ENCODE measurements at regions of chr3 and their contacts with region 1.

Region 1: DNA sequence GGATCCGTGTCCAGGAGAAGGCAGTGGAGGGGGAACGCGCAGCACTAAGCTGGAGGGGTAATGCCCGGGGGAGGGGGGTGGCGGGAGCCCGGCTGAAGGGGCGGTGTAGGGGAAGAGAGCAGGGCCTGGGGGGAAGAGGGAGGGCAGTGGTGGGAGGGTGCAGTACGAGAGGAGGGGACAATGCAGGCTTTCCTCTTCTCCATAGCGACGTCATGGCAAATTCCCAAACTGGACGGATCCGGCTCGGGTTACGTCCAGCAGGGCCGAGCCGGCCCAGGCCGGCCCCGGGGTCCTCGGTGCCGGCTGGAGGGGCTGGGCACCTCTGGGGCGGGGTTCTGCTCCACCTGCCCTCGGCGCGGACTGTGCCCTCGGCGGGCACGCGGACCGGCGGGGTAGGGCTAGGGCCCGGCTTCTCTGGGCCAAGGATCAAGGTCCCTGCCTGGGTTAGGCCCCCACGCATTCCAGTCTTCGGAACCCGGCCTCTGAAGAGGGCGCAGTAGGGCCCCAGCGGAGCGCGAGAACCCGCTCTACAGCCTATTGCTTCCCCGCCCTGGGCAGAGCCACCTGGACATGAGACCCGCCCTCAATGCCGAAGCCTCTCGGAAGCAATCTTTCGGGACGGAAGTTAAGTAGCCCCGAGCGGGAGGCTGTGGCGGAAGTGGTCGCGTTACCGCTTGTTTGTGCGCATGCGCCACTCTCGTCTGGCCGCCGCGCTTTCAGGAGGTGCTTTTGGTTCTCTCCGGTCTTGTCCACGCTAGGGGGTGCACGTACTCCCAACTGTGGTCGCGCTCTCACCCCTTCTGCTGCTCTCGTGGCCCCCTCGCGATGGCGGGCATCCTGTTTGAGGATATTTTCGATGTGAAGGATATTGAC is 1.4 kb downstream of the POLR2H start:
- DNase-seq: peak; percentile 98
- H3K4me3 Mint-ChIP-seq: peak overlapping the region; percentile 96
- H3K27ac Mint-ChIP-seq: peak overlapping the region; percentile 94
- H3K4me1 Mint-ChIP-seq: peaks cover 30% of the 10 kb centered on the region
- H3K27me3 Mint-ChIP-seq: no peaks in the 10 kb centered on the region

Region 2: DNA sequence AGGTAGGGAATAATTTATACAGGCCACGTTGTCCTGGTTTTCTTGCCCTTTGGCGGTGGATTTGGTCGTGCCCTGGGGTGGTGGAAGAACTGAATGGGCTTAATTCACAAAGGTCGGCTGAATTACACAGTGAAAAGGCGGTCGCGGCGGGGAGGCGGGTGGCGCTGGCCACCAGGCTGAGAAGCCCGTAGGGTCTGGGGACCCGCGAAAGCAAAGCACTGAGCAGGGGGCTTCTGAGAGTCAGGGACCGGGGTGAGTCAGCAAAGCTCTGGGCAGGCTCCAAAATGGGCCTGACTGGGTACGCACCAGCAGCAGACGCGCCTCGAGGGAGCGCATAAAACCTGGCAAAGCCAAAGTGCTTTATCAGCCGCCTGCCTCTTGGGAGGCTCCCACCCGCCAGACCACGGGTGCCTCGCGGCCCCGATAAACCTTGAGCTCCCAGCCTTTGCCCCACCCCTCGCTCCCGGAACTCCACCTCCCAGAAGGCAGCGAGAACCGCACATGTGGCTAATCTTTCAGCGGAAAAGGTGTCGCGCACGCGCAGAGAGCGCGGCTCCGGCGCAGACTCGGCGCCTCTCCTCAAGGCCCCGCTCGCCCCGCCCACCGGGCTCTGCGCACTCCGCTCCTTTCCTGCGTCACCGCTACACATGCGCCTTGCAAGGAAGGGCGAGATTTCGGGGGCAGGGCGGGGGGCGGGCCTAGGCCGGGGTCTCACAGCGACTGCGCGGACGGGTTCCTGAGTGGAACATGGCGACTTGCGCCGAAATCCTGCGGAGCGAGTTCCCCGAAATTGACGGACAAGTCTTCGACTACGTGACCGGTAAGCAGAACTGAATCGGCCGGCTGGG is 177.2 kb before region 1 on chr3 and contains the start of gene ABCF3:
- CTCF ChIA-PET with region 1: interaction called, 3 read pairs
- POLR2A ChIA-PET with region 1: no interaction called
- intact Hi-C with region 1: loop called (anchors 2 kb)
- DNase-seq: peak; percentile 99
- H3K4me3 Mint-ChIP-seq: peak within 1 kb of the TSS; percentile 96
- H3K27ac Mint-ChIP-seq: peak within 1 kb of the TSS; percentile 92
- H3K4me1 Mint-ChIP-seq: peaks cover 29% of the 10 kb centered on the region
- H3K27me3 Mint-ChIP-seq: no peaks in the 10 kb centered on the region
- total RNA-seq, gene ABCF3: 41.2 to 48.7 TPM

Region 3: DNA sequence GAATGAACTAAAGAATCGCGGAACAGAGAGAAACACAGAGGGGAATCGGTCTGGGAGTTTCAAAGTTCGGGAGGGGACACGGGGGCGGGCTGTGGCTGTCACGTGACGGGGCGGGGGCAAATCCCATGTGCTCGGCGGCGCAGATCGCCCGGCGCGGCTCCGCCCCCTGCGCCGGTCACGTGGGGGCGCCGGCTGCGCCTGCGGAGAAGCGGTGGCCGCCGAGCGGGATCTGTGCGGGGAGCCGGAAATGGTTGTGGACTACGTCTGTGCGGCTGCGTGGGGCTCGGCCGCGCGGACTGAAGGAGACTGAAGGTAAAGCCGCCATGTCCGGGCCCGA is 48.6 kb before region 1 on chr3 and contains the start of gene EIF4G1:
- CTCF ChIA-PET with region 1: no interaction called
- POLR2A ChIA-PET with region 1: no interaction called
- intact Hi-C with region 1: loop called (anchors 1 kb)
- DNase-seq: peak; percentile 95
- H3K4me3 Mint-ChIP-seq: peak within 1 kb of the TSS; percentile 86
- H3K27ac Mint-ChIP-seq: peak within 1 kb of the TSS; percentile 93
- H3K4me1 Mint-ChIP-seq: peaks cover 29% of the 10 kb centered on the region
- H3K27me3 Mint-ChIP-seq: no peaks in the 10 kb centered on the region
- total RNA-seq, gene EIF4G1: 410 to 432 TPM

Region 4: DNA sequence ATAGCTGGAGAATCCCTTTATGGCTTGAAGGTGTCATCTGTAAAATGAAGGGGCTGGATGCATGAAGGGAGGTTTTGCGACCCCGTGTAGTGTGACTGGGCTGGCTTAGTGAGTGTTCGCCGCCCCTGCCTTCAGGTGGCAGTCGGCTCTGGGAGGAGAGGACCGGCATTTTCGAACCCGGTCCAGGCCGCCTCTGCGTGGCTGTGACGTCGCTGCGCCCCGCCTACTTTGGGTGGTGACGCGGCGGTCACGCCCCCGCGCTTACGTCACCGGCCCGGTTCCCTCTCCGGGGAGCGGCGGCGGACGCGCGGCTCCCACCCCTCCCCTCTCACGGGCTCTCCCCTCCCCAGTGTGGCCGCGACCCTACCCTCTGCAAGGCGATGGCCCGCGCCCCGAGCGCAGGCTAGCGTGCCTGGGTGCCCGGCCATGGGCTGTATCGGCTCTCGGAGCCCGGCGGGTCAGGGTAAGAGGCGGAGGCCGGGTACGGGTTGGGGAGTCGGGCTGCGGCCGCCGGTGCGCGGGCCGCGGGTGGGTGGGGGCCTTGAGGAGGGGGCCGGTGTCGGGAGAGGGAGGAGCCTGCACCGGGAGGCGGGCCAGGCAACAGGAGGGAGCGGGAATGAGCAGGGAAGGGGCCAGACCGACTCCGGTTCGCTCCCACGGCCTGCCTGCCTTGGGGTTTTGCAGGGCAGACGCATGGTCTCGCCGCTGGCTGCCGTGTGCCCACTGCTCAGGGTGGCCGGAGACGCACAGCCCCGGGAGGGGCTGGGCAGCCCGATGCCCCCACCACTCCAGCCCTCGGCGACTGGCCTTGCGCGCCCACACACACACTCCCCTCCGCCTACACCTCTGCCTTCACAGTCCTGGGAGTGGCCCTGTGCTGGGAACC is 27.0 kb before region 1 on chr3:
- CTCF ChIA-PET with region 1: no interaction called
- POLR2A ChIA-PET with region 1: interaction called, 4 read pairs
- intact Hi-C with region 1: loop called (anchors 1 kb)
- DNase-seq: peak; percentile 89
- H3K4me3 Mint-ChIP-seq: peak overlapping the region; percentile 81
- H3K27ac Mint-ChIP-seq: peak overlapping the region; percentile 88
- H3K4me1 Mint-ChIP-seq: peaks cover 54% of the 10 kb centered on the region
- H3K27me3 Mint-ChIP-seq: no peaks in the 10 kb centered on the region

Region 5: GRCh38 chr3:184523825-184524615 is 161.1 kb after region 1 on chr3:
- CTCF ChIA-PET with region 1: no interaction called
- POLR2A ChIA-PET with region 1: no interaction called
- intact Hi-C with region 1: loop called (anchors 2 kb)
- DNase-seq: peak; percentile 59
- H3K4me3 Mint-ChIP-seq: no peak overlapping the region
- H3K27ac Mint-ChIP-seq: no peak overlapping the region
- H3K4me1 Mint-ChIP-seq: peaks cover 18% of the 10 kb centered on the region
- H3K27me3 Mint-ChIP-seq: peaks cover 24% of the 10 kb centered on the region

Region 6: DNA sequence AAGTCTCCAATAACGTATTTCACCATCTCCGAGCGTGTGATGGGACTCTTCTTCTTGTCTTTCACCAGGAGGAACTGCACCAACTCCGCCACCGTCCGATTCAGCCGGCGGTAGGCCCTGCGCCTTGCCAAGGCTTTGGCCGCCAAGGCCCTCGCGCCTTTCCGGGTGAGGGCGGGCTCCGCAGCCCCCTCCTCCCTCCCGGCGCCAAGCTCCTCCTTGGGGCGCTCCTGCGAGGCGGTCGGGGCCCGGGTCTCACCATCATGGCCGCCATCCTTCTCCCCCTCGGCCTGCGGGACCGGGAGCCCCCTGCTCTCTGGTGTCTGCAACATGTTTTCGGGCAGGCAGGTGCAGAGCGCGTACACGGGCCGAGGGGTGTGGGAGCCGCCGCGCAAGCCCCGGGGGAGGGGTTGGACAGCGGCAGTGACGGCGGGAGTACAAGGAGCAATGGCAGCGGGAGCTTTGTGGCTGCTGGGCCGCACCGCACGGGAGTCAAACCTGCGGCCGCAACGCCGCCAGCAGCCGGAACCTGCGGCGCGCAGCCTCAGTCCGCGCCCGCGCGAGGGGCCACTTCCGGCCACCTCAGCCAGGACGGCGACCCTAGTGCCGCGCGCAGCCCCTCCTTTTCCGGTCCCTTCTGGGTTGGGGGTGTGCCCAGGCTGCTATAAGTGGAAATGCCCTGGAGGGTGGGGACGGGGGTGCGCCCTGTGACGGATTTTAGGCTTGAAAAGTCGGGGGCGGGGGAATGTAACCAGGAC is 348.8 kb after region 1 on chr3 and contains the start of gene MAGEF1:
- CTCF ChIA-PET with region 1: no interaction called
- POLR2A ChIA-PET with region 1: interaction called, 4 read pairs
- intact Hi-C with region 1: loop called (anchors 5 kb)
- DNase-seq: peak; percentile 87
- H3K4me3 Mint-ChIP-seq: peak within 1 kb of the TSS; percentile 92
- H3K27ac Mint-ChIP-seq: peak within 1 kb of the TSS; percentile 91
- H3K4me1 Mint-ChIP-seq: peaks cover 39% of the 10 kb centered on the region
- H3K27me3 Mint-ChIP-seq: no peaks in the 10 kb centered on the region
- total RNA-seq, gene MAGEF1: 20.6 to 22.5 TPM

Region 7: GRCh38 chr3:184811999-184812661 is 449.2 kb after region 1 on chr3 and contains the start of gene VPS8:
- CTCF ChIA-PET with region 1: no interaction called
- POLR2A ChIA-PET with region 1: no interaction called
- intact Hi-C with region 1: loop called (anchors 2 kb)
- DNase-seq: peak; percentile 98
- H3K4me3 Mint-ChIP-seq: peak within 1 kb of the TSS; percentile 87
- H3K27ac Mint-ChIP-seq: peak within 1 kb of the TSS; percentile 84
- H3K4me1 Mint-ChIP-seq: peaks cover 51% of the 10 kb centered on the region
- H3K27me3 Mint-ChIP-seq: no peaks in the 10 kb centered on the region
- total RNA-seq, gene VPS8: 28.7 to 32.3 TPM

Measured in activated CD4-positive, alpha-beta memory T cell treated with anti-CD3 and anti-CD28 coated beads for 36 hours (primary cell).